Right ventricle myocardium superior (tissue), 1 donor: ENCODE measurements at regions of chr13 and their contacts with region 1.

Region 1: GRCh38 chr13:22801402-22802003 is 379.3 kb upstream of the SGCG start:
- DNase-seq: no peak
- ATAC-seq: no peak

Region 2: DNA sequence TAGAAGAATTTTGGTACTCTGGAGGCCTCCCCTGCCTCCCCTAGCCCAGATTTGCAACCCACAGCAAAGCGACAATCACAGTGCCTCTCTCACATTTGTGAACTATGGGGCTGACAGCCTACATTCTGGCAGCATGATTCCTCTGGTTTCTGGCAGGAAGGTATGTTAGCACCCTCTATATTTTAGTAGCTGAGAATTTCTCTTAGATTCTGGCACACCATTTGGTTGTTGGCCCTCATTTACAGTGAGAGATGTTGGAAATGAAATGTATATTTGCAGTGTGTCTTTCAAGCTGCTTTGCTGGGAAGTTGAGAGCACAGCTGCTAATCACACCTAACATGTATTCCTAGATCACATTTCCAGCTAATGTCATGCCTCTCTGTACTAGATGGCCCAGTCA is 395.6 kb before region 1 on chr13:
- intact Hi-C with region 1: no loop called
- DNase-seq: no peak
- ATAC-seq: no peak

Region 3: DNA sequence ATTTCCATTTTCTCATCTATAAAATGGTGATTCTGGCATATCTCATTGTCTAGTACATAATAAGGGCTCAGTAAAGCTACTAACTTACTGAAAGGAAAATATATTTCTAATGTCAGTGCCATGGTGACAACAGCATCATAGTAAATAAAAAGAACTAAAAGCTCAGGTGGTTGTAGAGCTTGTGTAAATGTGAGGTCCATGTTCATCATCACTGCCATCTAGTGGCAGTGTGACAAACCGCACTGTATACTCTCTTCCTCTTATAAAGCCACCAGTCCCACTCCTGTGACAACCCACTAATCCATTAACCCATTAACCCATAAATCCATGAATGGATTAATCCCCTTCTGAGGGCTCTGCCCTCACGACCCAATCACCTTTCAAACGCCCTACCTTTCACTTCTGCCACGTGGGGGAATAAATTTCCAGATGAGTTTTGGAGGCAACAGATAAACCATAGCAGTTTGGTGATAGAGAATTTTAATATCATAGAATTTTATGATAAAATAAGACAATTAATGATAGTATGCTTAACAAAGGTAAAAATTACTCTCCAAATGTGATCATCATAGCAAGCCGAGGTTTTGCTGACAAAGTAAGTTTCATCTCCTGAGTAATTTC is 218.8 kb after region 1 on chr13:
- intact Hi-C with region 1: loop called (anchors 2 kb)
- DNase-seq: no peak
- ATAC-seq: peak; percentile 88